PC-9 (cell line): ENCODE measurements at regions of chr19 and their contacts with region 1.

Region 1: DNA sequence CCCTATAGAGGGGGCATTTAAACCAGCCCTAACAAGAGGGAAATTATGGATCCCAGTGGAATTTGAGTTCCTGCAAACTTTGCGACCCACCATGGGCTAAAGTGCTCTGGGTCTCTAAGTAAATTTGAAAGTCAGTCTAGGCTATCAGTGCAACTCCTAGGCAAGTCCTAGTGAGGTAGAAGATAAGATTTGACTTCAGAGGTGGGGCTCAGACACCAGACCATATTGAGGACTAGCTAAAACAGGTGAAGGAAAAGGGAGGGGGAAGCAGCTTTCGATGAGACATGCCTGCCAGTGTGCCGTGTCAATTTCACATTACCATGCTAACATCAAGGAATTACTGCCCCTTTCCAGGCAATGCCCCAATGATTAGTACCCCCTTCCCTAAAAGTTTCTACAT is 38.4 kb downstream of the CD320 start:
- DNase-seq: peak in 1 of 2 experiments; percentile 32
- H3K4me3 ChIP-seq: no peak overlapping the region
- H3K27ac ChIP-seq: no peak overlapping the region
- H3K4me1 ChIP-seq: 0 out of 2 replicates have a peak, but pooled peaks cover 4% of the 10 kb centered on the region
- H3K27me3 ChIP-seq: no peaks in the 10 kb centered on the region
- CTCF ChIP-seq: no peak

Region 2: DNA sequence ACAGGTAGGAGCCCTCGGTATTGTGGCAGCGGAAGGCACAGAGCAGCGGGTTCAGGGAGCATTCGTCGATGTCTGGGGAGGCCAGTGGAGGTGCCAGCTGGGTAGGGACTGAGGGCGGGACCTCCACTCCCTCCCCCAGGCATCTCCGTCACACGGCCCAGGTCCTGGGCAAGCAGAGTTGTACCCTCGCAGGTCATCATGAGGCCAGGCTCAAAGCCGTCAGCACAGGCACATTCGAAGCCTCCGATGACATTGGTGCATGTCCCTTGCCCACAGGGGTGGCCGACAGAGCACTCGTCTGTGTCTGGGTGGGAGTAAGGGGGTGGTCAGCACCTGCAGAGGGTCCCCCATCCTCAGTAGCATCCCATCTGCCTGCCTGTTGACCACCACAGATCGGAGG is 181.8 kb before region 1 on chr19:
- CTCF ChIA-PET with region 1: interaction called, 17 read pairs
- POLR2A ChIA-PET with region 1: no interaction called
- intact Hi-C with region 1: no loop called
- DNase-seq: no peak
- H3K4me3 ChIP-seq: no peak overlapping the region
- H3K27ac ChIP-seq: no peak overlapping the region
- H3K4me1 ChIP-seq: peaks cover 5% of the 10 kb centered on the region; the same call in 1 of the 2 replicates
- H3K27me3 ChIP-seq: peaks cover 19% of the 10 kb centered on the region; the same call in 1 of the 2 replicates
- CTCF ChIP-seq: no peak

Region 3: DNA sequence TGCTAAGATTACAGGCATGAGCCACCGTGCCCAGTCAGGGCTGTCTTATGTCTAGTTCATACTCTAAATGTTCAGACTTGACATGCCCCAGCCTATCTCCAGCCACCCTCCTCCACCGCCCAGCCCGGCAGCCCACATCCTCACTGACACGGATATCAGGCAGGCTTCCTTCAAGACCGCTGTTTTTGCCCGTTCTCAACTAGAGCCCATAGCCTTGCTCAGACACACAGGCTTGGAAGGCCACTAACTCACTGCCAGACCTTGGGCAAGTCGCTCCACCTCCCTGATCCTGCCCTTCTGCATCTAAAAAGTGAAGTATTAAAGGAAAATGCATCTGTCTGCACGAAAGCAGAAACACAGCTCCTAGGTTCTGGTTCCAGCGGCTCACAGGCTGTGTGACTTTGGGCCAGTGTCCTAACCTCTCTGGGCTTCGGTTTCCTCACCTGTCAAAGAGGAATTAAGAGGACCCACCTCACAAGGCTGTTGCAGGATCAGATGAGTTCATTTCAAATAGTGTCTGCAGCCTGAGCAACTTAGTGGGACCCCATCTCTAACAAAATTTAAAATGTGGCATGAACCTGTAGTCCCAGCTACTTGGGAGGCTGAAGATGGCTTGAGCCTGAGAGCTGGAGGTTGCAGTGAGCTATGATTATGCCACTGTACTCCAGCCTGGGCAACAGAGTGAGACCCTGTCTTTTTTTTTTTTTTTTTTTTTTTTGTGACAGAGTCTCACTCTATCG is 75.0 kb before region 1 on chr19:
- CTCF ChIA-PET with region 1: no interaction called
- POLR2A ChIA-PET with region 1: no interaction called
- intact Hi-C with region 1: no loop called
- DNase-seq: no peak
- H3K4me3 ChIP-seq: no peak overlapping the region
- H3K27ac ChIP-seq: no peak overlapping the region
- H3K4me1 ChIP-seq: no peaks in the 10 kb centered on the region
- H3K27me3 ChIP-seq: no peaks in the 10 kb centered on the region
- CTCF ChIP-seq: no peak

Region 4: GRCh38 chr19:8259142-8259917 is 10.4 kb before region 1 on chr19:
- CTCF ChIA-PET with region 1: no interaction called
- POLR2A ChIA-PET with region 1: no interaction called
- intact Hi-C with region 1: no loop called
- DNase-seq: peak in 1 of 2 experiments; percentile 33
- H3K4me3 ChIP-seq: no peak overlapping the region
- H3K27ac ChIP-seq: no peak overlapping the region
- H3K4me1 ChIP-seq: no peaks in the 10 kb centered on the region
- H3K27me3 ChIP-seq: no peaks in the 10 kb centered on the region
- CTCF ChIP-seq: no peak

Region 5: DNA sequence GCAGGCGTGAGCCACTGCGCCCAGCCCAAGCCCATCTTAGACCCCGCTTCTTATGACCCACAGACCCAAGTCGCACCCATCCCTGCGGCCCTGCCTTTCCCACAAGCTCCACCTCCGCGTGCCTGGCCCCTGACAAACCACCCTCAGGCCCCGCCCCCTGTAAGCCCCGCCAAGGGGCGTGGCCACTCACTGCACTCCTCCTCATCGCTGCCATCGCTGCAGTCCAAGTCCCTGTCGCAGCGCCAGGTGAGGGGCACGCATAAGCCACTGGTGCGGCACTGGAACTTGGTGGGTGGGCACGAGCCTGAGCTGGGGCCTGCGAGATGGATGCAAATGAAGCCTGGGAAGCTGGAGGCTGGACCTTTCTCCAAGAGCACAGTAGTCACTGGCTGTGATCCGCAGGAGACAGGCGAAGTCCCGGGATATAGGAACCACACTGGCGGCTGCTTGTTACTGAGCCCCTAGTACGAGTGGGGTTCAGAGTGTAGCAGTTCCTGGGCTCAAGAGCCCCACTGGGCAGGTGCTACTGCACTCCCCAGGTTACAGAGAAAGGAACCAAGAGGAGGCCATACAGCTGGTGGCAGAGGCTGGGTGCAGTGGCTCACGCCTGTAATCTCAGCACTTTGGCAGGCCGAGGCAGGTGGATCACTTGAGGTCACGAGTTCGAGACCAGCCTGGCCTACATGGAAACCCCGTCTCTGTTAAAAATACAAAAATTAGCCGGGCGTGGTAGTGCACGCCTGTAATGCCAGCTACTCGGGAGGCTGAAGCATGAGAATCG is 35.3 kb after region 1 on chr19:
- CTCF ChIA-PET with region 1: no interaction called
- POLR2A ChIA-PET with region 1: no interaction called
- intact Hi-C with region 1: no loop called
- DNase-seq: peak in 1 of 2 experiments; percentile 35
- H3K4me3 ChIP-seq: no peak overlapping the region
- H3K27ac ChIP-seq: no peak overlapping the region
- H3K4me1 ChIP-seq: peaks cover 25% of the 10 kb centered on the region
- H3K27me3 ChIP-seq: no peaks in the 10 kb centered on the region
- CTCF ChIP-seq: no peak

Region 6: GRCh38 chr19:8363803-8364771 is 94.4 kb after region 1 on chr19 and contains the start of gene ANGPTL4:
- CTCF ChIA-PET with region 1: no interaction called
- POLR2A ChIA-PET with region 1: no interaction called
- intact Hi-C with region 1: no loop called
- DNase-seq: peak in 1 of 2 experiments; percentile 33
- H3K4me3 ChIP-seq: no peak within 1 kb of the TSS
- H3K27ac ChIP-seq: peak within 1 kb of the TSS; percentile 75
- H3K4me1 ChIP-seq: peaks cover 57% of the 10 kb centered on the region
- H3K27me3 ChIP-seq: no peaks in the 10 kb centered on the region
- CTCF ChIP-seq: no peak
- total RNA-seq, gene ANGPTL4: 0.30 TPM in 1 of 2 replicates, not detected in the other